Activated CD8-positive, alpha-beta T cell treated with anti-CD3 and anti-CD28 coated beads for 36 hours (primary cell): ENCODE measurements at regions of chr4 and their contacts with region 1.

Region 1: GRCh38 chr4:159191989-159192388 is 89.1 kb downstream of the RAPGEF2 start:
- DNase-seq: no peak
- ATAC-seq: no peak
- H3K4me3 Mint-ChIP-seq: no peak overlapping the region
- H3K27ac Mint-ChIP-seq: no peak overlapping the region
- H3K4me1 Mint-ChIP-seq: no peaks in the 10 kb centered on the region
- H3K27me3 Mint-ChIP-seq: no peaks in the 10 kb centered on the region
- CTCF ChIP-seq: peak; percentile 23

Region 2: DNA sequence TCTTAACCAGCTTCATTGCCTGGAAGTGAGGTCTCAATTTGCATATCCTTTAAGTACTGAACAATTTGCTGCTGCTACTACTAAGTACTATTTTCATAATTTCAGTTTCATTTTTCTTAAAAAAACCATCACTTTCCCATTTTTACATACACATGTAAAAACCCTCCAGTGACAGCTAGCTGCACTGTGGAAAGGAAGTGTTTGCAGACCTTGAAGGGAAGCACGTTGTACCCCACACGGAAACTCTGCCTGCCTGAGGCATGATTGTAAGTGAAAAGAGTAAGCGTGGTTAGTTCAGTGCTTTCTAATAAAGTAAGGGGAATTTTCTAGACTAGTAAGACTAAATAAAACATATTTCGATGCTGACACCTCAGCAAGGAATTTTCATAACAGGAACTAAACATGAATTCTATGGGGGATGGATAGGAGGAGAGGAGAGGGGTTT is 14.5 kb after region 1 on chr4:
- CTCF ChIA-PET with region 1: interaction called, 17 read pairs
- POLR2A ChIA-PET with region 1: interaction called, 4 read pairs
- intact Hi-C with region 1: no loop called
- DNase-seq: peak; percentile 71
- ATAC-seq: peak; percentile 86
- H3K4me3 Mint-ChIP-seq: peak overlapping the region; percentile 53
- H3K27ac Mint-ChIP-seq: peak overlapping the region; percentile 72
- H3K4me1 Mint-ChIP-seq: peaks cover 51% of the 10 kb centered on the region
- H3K27me3 Mint-ChIP-seq: no peaks in the 10 kb centered on the region
- CTCF ChIP-seq: no peak